ENCODE measurements at regions of chr11 and their contacts with region 1.

Region 1: GRCh38 chr11:87722756-87723565 is 452.3 kb downstream of the RAB38 start:
- DNase-seq: peak; percentile 10
- CTCF ChIP-seq: peak; percentile 69

Region 2: DNA sequence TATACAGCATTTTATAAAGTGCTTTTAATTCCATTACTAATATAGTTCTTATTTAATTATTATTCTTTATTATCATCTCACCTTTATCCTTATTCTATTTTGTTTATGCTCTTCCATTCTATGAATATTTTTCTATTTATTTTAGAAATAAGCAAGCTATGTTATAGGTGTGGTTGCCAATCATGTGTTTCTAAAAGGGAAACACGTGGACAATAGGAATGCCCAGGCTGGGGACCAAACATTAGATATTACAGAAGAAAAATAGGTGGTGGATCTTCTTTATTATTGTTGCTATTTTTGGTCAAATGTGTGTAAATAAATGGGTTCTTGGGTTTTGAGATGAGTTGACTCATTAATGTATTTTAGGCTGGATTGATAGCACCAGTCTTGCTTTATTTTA is 14.0 kb after region 1 on chr11:
- CTCF ChIA-PET with region 1: interaction called, 10 read pairs
- POLR2A ChIA-PET with region 1: no interaction called
- DNase-seq: no peak
- CTCF ChIP-seq: no peak